Posterior cingulate gyrus (tissue), 11 donors: ENCODE measurements at regions of chr4 and their contacts with region 1.

Region 1: DNA sequence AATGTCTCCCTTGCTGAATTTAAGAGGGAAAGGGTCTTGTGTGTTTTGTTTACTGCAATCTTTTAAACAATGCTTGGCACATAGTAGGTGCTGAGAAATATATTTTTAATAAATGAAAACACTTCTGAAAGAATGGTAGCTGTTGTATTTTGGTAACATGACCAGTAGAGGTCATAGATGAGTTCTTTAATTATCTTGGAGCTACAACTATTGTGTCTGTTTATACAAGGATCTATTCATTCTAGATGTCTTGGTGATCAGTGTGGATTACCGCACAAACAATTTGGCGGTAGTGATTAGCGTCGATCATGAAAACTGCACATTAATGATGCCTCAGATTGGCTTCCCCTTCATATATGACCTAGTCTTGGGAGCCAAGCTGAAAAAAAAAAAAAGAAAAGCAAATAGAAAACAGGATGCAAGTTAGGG is 21.4 kb upstream of the SCRG1 start:
- DNase-seq: no peak

Region 2: DNA sequence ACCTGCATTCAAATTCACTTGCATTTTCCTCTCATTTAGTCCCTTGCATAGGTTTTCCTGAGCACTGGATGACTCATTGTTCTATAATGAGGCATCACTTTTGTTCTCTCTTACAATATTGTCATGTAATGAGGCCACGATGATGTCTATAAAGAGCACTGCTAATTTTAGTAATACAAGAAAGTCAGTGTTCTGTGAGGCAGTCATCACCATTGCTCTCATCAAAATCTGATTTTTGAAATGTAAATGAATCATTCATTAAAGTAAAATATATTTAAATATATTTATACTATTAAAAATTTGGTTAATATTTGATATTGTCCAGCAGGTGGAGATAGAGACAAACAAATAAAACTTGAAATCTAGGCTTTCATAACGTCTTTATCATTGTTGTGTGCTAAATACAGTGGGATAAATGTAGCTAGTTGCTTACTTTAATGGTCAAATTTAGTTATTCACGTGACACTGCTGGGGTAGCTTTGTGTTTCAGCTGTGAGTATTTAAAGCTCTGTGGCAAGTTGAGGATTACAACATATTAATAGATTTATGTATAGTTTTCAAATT is 101.6 kb before region 1 on chr4:
- intact Hi-C with region 1: loop called (anchors 1 kb)
- DNase-seq: no peak

Region 3: GRCh38 chr4:173370477-173371291 is 49.7 kb before region 1 on chr4 and contains the start of gene SAP30:
- intact Hi-C with region 1: loop called (anchors 1 kb)
- DNase-seq: peak; percentile 94 to 99 (median 96)

Region 4: DNA sequence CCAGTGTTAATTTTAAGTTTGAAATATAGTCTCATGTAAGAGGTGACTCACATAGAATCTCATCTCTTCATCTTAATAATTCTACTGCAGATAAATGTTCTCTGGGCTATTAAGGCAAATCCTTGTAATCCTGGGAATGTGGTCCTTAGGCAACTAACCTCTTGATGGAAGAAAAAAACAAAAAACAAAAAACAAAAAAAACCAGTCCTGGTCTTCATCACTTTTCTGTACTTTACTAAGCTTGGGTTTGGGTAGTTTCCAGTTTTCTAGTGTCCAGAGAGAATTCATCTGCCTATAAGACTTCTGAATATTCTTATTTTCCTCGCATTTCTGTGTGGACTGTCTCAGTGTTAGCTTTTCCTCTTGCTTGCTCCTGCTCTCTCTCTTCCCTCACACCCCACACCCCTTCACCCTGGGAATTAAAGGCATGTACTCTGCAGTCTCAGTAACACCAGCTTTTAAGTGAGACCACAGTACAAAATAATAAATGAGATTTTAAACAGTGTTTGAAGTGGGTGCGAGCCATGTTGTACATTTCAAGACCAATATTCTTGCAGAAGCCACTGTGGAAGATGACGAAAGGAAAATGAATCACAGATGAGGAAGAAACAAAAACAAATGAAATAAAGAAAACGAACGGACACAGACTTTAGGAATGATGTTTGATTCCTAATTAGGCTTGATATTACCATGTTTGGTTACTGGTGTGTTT is 58.0 kb after region 1 on chr4:
- intact Hi-C with region 1: no loop called
- DNase-seq: no peak

Region 5: GRCh38 chr4:173494013-173494970 is 74.0 kb after region 1 on chr4:
- intact Hi-C with region 1: loop called (anchors 1 kb)
- DNase-seq: peak in 8 of 10 donors; percentile 44 to 91 (median 60)

Region 6: GRCh38 chr4:174120446-174121295 is 700.3 kb after region 1 on chr4:
- intact Hi-C with region 1: loop called (anchors 5 kb)
- DNase-seq: peak in 7 of 10 donors; percentile 15 to 86 (median 34)